Activated CD4-positive, alpha-beta T cell treated with anti-CD3 and anti-CD28 coated beads for 36 hours (primary cell): ENCODE measurements at regions of chr20 and their contacts with region 1.

Region 1: GRCh38 chr20:38833857-38834164 is 28.3 kb downstream of the PPP1R16B start:
- DNase-seq: peak; percentile 60
- ATAC-seq: peak; percentile 42
- H3K4me3 Mint-ChIP-seq: peak overlapping the region; percentile 8
- H3K27ac Mint-ChIP-seq: peak overlapping the region; percentile 95
- H3K4me1 Mint-ChIP-seq: peaks cover 72% of the 10 kb centered on the region
- H3K27me3 Mint-ChIP-seq: no peaks in the 10 kb centered on the region

Region 2: GRCh38 chr20:38590676-38591471 is 242.9 kb before region 1 on chr20:
- CTCF ChIA-PET with region 1: no interaction called
- POLR2A ChIA-PET with region 1: no interaction called
- intact Hi-C with region 1: no loop called
- DNase-seq: no peak
- ATAC-seq: no peak
- H3K4me3 Mint-ChIP-seq: no peak overlapping the region
- H3K27ac Mint-ChIP-seq: no peak overlapping the region
- H3K4me1 Mint-ChIP-seq: no peaks in the 10 kb centered on the region
- H3K27me3 Mint-ChIP-seq: no peaks in the 10 kb centered on the region

Region 3: GRCh38 chr20:38805502-38805957 is 28.3 kb before region 1 on chr20 and contains the start of gene PPP1R16B:
- CTCF ChIA-PET with region 1: interaction called, 4 read pairs
- POLR2A ChIA-PET with region 1: no interaction called
- intact Hi-C with region 1: loop called (anchors 1 to 2 kb)
- DNase-seq: peak; percentile 86
- ATAC-seq: peak; percentile 79
- H3K4me3 Mint-ChIP-seq: peak within 1 kb of the TSS; percentile 86
- H3K27ac Mint-ChIP-seq: peak within 1 kb of the TSS; percentile 93
- H3K4me1 Mint-ChIP-seq: peaks cover 46% of the 10 kb centered on the region
- H3K27me3 Mint-ChIP-seq: no peaks in the 10 kb centered on the region
- total RNA-seq, gene PPP1R16B: 78.8 to 84.0 TPM

Region 4: DNA sequence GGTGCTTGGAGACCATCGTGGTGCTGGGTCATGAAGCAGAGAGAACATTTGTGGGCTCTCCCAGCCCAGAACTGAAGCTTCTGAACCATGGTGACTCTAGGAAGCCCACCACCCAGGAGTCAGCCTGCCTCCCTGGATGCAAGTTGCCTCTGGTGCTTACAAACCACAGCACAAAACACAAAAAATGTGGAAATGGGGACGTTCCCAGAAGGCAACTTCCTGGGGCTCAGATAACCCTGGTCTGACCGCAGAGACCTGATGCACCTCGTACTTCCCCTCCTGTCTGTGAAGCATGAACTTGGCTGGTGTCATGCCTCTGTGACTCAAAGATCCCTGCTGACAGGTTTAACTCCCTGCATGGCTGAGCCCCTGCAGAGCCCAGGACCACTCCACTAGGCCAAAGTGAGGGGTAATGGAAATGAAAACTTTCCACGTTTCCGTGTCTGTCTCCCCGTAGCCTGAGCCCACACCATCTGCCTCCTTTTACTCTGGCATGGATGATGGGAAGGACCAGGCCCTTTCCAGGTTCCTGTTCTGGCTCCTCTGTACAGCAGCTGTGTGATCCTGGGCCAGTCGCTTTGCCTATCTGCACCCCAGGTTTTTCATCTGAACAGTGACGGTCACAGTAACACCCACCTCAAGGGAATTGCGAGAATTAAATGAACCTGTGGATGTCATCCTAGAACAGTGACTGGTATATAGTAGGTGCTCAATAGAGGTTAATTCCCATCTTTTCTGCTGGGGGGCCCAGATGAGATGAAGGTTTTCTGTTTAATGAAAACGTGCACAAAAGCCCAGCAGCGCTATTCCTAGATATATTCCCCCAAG is 29.4 kb after region 1 on chr20:
- CTCF ChIA-PET with region 1: interaction called, 10 read pairs
- POLR2A ChIA-PET with region 1: no interaction called
- intact Hi-C with region 1: no loop called
- DNase-seq: peak; percentile 79
- ATAC-seq: peak; percentile 91
- H3K4me3 Mint-ChIP-seq: peak overlapping the region; percentile 3
- H3K27ac Mint-ChIP-seq: peak overlapping the region; percentile 77
- H3K4me1 Mint-ChIP-seq: peaks cover 56% of the 10 kb centered on the region
- H3K27me3 Mint-ChIP-seq: no peaks in the 10 kb centered on the region